HEK293 (cell line): ENCODE measurements at regions of chr10 and their contacts with region 1.

Region 1: GRCh38 chr10:100743626-100744135 is 1.7 kb upstream of the PAX2 start:
- H3K4me3 ChIP-seq: peak overlapping the region; percentile 3; the same call in 1 of the 2 replicates
- H3K27ac ChIP-seq: peak overlapping the region; percentile 67; the same call in 1 of the 2 replicates
- H3K4me1 ChIP-seq: peaks cover 2% of the 10 kb centered on the region; the same call in 1 of the 2 replicates
- CTCF ChIP-seq: peak; percentile 83

Region 2: DNA sequence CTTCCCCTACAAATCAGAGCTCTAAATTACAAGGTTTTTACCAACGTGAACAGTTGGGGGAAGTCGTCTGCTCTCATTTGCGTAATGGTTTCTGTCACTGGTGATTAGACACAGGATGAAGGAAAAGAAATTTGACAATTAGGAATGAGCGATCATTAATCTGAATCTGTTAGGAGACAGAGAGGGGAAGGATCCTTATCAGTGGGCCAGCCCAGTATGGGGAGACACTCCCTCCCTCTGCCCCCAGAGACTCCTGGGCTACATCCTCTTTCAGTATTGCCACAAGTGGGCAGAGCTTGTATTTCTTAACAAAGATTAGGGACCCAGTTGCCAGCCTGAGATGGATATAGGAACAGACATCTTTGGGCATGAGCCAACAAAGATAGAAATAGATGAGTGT is 192.5 kb before region 1 on chr10:
- CTCF ChIA-PET with region 1: interaction called, 17 read pairs
- POLR2A ChIA-PET with region 1: no interaction called
- H3K4me3 ChIP-seq: no peak overlapping the region
- H3K27ac ChIP-seq: no peak overlapping the region
- H3K4me1 ChIP-seq: no peaks in the 10 kb centered on the region
- CTCF ChIP-seq: no peak

Region 3: DNA sequence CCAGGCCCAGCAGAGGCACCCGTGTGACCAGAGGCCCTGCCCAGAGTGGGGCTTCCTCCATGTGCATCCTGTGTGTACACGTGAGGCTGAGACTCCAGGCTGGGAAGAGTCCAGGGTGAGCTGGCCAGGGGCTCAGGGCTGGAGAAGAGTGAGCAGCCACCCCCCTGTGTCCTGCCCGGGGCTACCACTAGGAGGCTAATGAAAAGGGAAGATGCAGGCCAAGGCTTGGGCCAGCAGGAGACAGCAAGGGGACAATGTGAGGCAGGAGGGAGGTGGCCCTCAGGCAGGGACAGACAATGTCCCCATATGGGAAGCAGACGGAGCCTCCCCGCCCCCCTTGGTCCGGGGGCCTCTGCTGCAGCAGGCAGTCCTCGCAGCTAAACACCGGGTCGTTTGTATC is 105.9 kb before region 1 on chr10:
- CTCF ChIA-PET with region 1: interaction called, 14 read pairs
- POLR2A ChIA-PET with region 1: interaction called, 6 read pairs
- H3K4me3 ChIP-seq: no peak overlapping the region
- H3K27ac ChIP-seq: no peak overlapping the region
- H3K4me1 ChIP-seq: no peaks in the 10 kb centered on the region
- CTCF ChIP-seq: peak; percentile 87

Region 4: GRCh38 chr10:100710151-100710871 is 33.4 kb before region 1 on chr10:
- CTCF ChIA-PET with region 1: interaction called, 13 read pairs
- POLR2A ChIA-PET with region 1: no interaction called
- H3K4me3 ChIP-seq: peak overlapping the region; percentile 26
- H3K27ac ChIP-seq: no peak overlapping the region
- H3K4me1 ChIP-seq: peaks cover 3% of the 10 kb centered on the region; the same call in 1 of the 2 replicates
- CTCF ChIP-seq: no peak; the same call in 1 of the 2 replicates

Region 5: DNA sequence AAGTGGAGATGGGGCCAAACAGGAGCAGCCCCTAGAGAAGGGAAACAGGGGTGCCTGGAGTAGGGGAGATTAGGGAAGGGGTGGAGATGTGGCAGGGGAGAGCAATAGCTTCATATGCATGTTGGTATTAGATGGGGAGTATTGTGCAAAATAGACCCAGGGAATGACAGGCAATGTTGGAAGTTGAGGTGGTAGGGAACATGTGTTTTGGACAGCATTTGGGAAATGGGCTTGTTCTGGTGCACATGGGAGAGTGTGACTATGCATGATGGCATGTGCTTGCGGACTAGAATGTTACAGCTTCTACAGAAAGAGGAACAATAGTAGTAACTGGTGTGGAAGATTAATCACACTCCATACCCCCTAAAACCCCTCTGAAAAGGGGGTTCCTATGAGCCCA is 12.1 kb after region 1 on chr10:
- CTCF ChIA-PET with region 1: interaction called, 32 read pairs
- POLR2A ChIA-PET with region 1: no interaction called
- H3K4me3 ChIP-seq: no peak overlapping the region
- H3K27ac ChIP-seq: no peak overlapping the region
- H3K4me1 ChIP-seq: no peaks in the 10 kb centered on the region
- CTCF ChIP-seq: no peak

Region 6: DNA sequence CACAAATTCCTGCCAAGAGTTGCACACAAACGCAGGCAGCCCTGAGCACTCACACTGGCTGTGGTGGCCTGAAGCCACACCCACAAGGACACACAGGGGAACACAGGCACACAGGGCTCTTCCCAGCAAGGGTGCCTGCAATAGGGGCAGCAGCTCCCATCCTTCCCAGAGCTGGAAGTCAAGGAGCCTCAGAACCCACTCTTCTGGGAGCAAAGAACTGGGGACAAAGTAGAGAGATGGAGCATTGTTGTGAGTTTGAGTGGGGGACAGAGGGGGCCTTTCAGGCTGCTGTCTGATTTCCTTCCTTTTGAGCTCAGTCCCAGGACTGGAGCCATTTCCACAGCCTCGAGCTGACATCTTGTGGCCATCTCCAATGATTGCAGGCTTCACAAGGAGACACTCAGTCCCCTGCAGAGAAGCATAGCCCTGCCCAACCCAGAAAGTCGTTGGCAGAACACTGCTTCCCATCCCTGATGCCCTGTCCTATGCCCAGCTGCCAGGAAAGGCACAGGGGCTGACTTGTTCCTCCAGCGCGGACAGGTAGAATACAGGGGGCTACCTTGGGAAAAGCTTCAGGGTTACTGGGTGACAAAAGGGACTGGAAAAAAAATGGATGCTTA is 134.7 kb after region 1 on chr10:
- CTCF ChIA-PET with region 1: interaction called, 49 read pairs
- POLR2A ChIA-PET with region 1: interaction called, 7 read pairs
- H3K4me3 ChIP-seq: no peak overlapping the region
- H3K27ac ChIP-seq: no peak overlapping the region
- H3K4me1 ChIP-seq: no peaks in the 10 kb centered on the region
- CTCF ChIP-seq: peak; percentile 88

Region 7: DNA sequence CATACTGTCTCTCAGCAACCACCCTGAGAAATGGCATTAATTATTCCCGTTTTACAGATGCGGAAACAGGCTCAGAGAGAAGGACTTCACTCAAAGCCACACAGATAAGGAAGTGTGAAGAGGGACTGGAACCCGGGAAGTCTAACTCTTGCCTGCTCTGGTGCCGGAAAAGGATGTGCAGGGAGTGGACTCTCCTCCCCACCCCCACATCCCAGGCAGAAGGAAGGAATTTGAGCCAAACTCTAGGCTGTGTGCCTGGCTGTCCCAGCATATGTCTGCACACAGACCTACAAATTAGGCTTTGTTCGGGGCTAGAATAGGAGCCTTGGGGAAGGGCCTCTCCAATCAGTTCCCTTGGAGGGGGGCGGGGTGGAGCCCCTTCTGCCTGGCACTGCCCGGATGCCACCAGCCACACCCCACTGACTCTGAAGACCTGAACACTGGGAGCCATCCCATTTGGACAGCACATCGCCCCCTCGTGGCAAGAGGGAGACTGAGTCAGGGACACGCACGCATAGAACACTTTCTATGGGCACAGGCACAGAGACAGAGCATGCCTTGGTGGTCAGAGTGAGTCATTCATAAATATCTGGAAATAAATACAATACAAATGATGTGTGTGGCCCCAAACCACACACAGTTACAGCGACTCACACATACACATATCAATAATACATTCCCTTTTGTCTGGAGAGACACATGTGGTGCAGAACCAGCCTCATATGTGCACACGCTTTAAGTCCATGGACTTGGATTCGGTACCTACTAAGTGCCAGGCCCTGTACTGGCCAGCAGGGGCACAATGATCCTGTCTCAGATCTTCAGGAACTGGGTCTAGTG is 269.1 kb after region 1 on chr10:
- CTCF ChIA-PET with region 1: no interaction called
- POLR2A ChIA-PET with region 1: no interaction called
- H3K4me3 ChIP-seq: no peak overlapping the region
- H3K27ac ChIP-seq: no peak overlapping the region
- H3K4me1 ChIP-seq: peaks cover 4% of the 10 kb centered on the region; the same call in 1 of the 2 replicates
- CTCF ChIP-seq: peak; percentile 98

Region 8: DNA sequence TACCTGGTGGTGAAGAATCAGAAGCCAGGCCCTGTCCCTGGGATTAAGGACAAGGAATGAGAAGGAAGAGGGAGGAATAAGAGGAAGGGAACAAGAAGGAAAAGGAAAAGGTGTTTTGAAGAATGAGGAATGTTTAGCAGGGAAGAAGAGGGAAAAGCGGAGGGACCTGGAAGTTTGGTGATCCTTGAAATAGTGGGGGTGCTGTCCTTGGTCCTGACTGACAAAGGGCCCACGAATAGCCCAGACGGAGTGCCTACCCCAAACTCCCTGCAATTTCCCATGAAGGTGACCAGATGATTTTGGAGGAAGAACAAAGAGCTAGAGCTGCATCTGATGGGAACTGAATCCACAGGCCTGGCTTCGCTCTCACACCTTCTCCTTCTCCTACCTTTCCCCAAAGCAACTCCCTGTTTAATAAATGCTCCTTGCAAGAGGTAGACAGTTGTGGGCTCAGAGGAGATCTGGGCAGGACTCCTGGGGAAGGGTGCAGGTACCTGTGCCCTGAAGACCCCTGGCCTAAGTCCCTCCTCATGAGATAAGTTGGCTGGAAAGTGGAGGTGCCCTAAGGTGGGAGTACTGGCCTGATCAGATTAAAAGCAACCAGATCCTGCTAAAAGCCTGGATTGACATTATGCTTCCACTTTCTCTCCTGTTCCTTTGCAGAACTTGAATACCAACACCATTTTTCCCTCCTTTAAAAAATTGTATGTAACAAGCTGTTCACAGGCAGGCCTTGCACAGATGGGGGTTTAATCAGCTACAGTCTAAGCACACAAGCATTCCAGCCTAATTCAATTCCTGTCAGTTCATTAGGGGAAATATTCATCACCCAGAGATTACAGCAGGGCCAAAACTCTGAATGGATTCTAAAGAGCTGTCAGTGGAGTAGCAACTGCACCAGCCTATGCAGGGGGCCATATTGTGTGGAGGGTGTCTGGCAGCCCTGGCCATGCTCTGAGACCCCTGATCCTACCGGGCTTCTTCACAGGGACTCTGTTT is 337.6 kb after region 1 on chr10:
- CTCF ChIA-PET with region 1: no interaction called
- POLR2A ChIA-PET with region 1: no interaction called
- H3K4me3 ChIP-seq: no peak overlapping the region
- H3K27ac ChIP-seq: no peak overlapping the region
- H3K4me1 ChIP-seq: no peaks in the 10 kb centered on the region
- CTCF ChIP-seq: no peak

Region 9: GRCh38 chr10:101120884-101121653 is 377.4 kb after region 1 on chr10:
- CTCF ChIA-PET with region 1: no interaction called
- POLR2A ChIA-PET with region 1: no interaction called
- H3K4me3 ChIP-seq: no peak overlapping the region
- H3K27ac ChIP-seq: no peak overlapping the region
- H3K4me1 ChIP-seq: no peaks in the 10 kb centered on the region
- CTCF ChIP-seq: no peak